Activated CD8-positive, alpha-beta T cell treated with anti-CD3 and anti-CD28 coated beads, Interleukin-2, amount 10 ng/mL, durations not matched to agents 7 days and 5 days (primary cell): ENCODE measurements at regions of chr1 and their contacts with region 1.

Region 1: DNA sequence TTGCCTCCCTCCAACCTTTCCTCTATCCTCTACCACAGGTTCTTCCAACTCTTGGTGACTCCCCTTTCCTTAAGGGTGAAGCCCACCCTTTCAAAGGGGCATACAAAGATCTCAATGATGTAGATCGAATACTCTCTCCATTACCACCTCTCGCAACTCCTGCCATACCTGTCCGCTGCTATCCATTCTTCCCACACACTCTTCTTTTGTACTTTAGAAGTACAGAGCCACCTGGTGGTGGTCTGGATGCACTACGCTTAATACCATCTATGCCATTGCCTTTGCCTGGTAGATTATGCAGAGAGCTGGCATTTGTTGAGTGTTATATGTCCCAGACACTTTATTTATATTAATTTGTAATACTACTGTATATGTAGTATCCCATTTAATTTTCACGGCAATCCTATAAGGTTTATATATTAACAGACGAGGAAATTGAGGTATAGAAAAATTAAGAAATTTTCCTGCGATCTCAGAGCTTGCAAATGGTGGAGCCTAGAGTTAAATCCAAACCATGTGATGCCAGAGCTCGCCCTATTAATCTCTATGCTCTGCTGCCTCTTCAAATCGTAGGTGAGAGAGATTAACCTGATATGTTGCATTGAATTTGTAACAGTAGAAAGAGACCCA is 22.9 kb downstream of the TSHB start:
- DNase-seq: peak; percentile 66
- ATAC-seq: peak; percentile 84
- H3K4me3 Mint-ChIP-seq: no peak overlapping the region
- H3K27ac Mint-ChIP-seq: no peak overlapping the region
- H3K4me1 Mint-ChIP-seq: peaks cover 5% of the 10 kb centered on the region
- H3K27me3 Mint-ChIP-seq: peaks cover 7% of the 10 kb centered on the region

Region 2: GRCh38 chr1:115031595-115031994 is 21.0 kb before region 1 on chr1:
- CTCF ChIA-PET with region 1: interaction called, 10 read pairs
- POLR2A ChIA-PET with region 1: no interaction called
- DNase-seq: no peak
- ATAC-seq: no peak
- H3K4me3 Mint-ChIP-seq: no peak overlapping the region
- H3K27ac Mint-ChIP-seq: no peak overlapping the region
- H3K4me1 Mint-ChIP-seq: no peaks in the 10 kb centered on the region
- H3K27me3 Mint-ChIP-seq: peaks cover 4% of the 10 kb centered on the region

Region 3: GRCh38 chr1:115073298-115074087 is 20.9 kb after region 1 on chr1:
- CTCF ChIA-PET with region 1: interaction called, 13 read pairs
- POLR2A ChIA-PET with region 1: no interaction called
- DNase-seq: no peak
- ATAC-seq: no peak
- H3K4me3 Mint-ChIP-seq: no peak overlapping the region
- H3K27ac Mint-ChIP-seq: no peak overlapping the region
- H3K4me1 Mint-ChIP-seq: peaks cover 2% of the 10 kb centered on the region
- H3K27me3 Mint-ChIP-seq: peaks cover 11% of the 10 kb centered on the region

Region 4: GRCh38 chr1:115105831-115106230 is 53.3 kb after region 1 on chr1:
- CTCF ChIA-PET with region 1: interaction called, 10 read pairs
- POLR2A ChIA-PET with region 1: no interaction called
- DNase-seq: no peak
- ATAC-seq: no peak
- H3K4me3 Mint-ChIP-seq: no peak overlapping the region
- H3K27ac Mint-ChIP-seq: no peak overlapping the region
- H3K4me1 Mint-ChIP-seq: peaks cover under 1% of the 10 kb centered on the region
- H3K27me3 Mint-ChIP-seq: peaks cover 3% of the 10 kb centered on the region